HepG2 (cell line): ENCODE measurements at regions of chr2 and their contacts with region 1.

Region 1: GRCh38 chr2:47906157-47907038 is at the start of gene FBXO11:
- DNase-seq: peak; percentile 98
- ATAC-seq: peak; percentile 90
- H3K4me3 ChIP-seq: peak within 1 kb of the TSS; percentile 96 to 100 (median 98)
- H3K27ac ChIP-seq: peak within 1 kb of the TSS; percentile 98
- H3K4me1 ChIP-seq: peaks cover 29% of the 10 kb centered on the region
- H3K27me3 ChIP-seq: peaks cover 0 to 1% of the 10 kb centered on the region in 2 experiments; a peak in 2 of 5 replicates
- CTCF ChIP-seq: peak; percentile 87
- EP300 ChIP-seq: no peak; a peak in 2 of 4 replicates
- POLR2A ChIP-seq: peak; percentile 75 to 88
- RAD21 ChIP-seq: peak; percentile 59
- total RNA-seq, gene FBXO11: 27.9 and 41.0 TPM in 2 replicates

Region 2: GRCh38 chr2:47602996-47603395 is 303.4 kb before region 1 on chr2:
- CTCF ChIA-PET with region 1: no interaction called
- POLR2A ChIA-PET with region 1: no interaction called
- in situ Hi-C with region 1: no loop called
- intact Hi-C with region 1: no loop called
- DNase-seq: no peak
- ATAC-seq: peak; percentile 63; the same call in 1 of the 3 replicates
- H3K4me3 ChIP-seq: no peak overlapping the region
- H3K27ac ChIP-seq: no peak overlapping the region
- H3K4me1 ChIP-seq: no peaks in the 10 kb centered on the region
- H3K27me3 ChIP-seq: peaks cover 0 to 12% of the 10 kb centered on the region in 2 experiments; a peak in 3 of 5 replicates
- CTCF ChIP-seq: no peak
- EP300 ChIP-seq: no peak
- POLR2A ChIP-seq: no peak
- RAD21 ChIP-seq: no peak

Region 3: DNA sequence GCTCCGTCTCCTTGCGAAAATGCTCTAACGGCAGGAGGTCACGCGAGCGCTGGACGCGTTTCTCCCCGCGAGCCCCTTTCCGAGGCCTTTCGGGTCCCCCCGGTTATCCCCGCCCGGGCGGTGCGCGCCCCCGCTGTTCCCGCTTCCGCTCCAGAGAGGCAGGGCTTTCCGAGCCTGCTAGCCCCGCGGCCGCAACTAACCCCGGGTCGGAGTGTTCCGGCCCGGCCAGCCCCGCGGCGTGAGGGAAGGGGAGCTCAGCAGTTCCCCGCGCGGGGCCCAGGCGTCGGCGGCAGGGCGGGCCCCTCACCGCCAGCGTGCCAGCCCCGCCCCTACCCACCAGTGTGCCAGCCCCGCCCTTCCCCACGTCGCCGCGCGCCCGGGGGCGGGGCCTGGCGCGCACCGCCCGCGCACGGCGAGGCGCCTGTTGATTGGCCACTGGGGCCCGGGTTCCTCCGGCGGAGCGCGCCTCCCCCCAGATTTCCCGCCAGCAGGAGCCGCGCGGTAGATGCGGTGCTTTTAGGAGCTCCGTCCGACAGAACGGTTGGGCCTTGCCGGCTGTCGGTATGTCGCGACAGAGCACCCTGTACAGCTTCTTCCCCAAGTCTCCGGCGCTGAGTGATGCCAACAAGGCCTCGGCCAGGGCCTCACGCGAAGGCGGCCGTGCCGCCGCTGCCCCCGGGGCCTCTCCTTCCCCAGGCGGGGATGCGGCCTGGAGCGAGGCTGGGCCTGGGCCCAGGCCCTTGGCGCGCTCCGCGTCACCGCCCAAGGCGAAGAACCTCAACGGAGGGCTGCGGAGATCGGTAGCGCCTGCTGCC is 123.5 kb before region 1 on chr2 and contains the start of gene MSH6:
- CTCF ChIA-PET with region 1: no interaction called
- POLR2A ChIA-PET with region 1: interaction called, 4 read pairs
- in situ Hi-C with region 1: no loop called
- intact Hi-C with region 1: loop called (anchors 10 kb)
- DNase-seq: peak; percentile 85
- ATAC-seq: peak; percentile 87
- H3K4me3 ChIP-seq: peak within 1 kb of the TSS; percentile 77 to 85 (median 82)
- H3K27ac ChIP-seq: peak within 1 kb of the TSS; percentile 93
- H3K4me1 ChIP-seq: peaks cover 50% of the 10 kb centered on the region
- H3K27me3 ChIP-seq: peaks cover 0 to 11% of the 10 kb centered on the region in 2 experiments; a peak in 3 of 5 replicates
- CTCF ChIP-seq: no peak; the same call in 1 of the 2 replicates
- EP300 ChIP-seq: no peak
- POLR2A ChIP-seq: peak; percentile 83 to 86
- RAD21 ChIP-seq: peak; percentile 40; the same call in 1 of the 2 replicates
- total RNA-seq, gene MSH6: 113 and 168 TPM in 2 replicates

Region 4: GRCh38 chr2:47950340-47951301 is 44.2 kb after region 1 on chr2:
- CTCF ChIA-PET with region 1: no interaction called
- POLR2A ChIA-PET with region 1: no interaction called
- in situ Hi-C with region 1: no loop called
- intact Hi-C with region 1: no loop called
- DNase-seq: no peak
- ATAC-seq: no peak
- H3K4me3 ChIP-seq: no peak overlapping the region
- H3K27ac ChIP-seq: no peak overlapping the region
- H3K4me1 ChIP-seq: no peaks in the 10 kb centered on the region
- H3K27me3 ChIP-seq: 0 out of 5 replicates have a peak, but pooled peaks cover 0 to 3% of the 10 kb centered on the region in 2 experiments
- CTCF ChIP-seq: no peak
- EP300 ChIP-seq: no peak
- POLR2A ChIP-seq: no peak
- RAD21 ChIP-seq: no peak

Region 5: GRCh38 chr2:48016225-48017019 is 110.0 kb after region 1 on chr2:
- CTCF ChIA-PET with region 1: no interaction called
- POLR2A ChIA-PET with region 1: no interaction called
- in situ Hi-C with region 1: no loop called
- intact Hi-C with region 1: loop called (anchors 1 kb)
- DNase-seq: peak; percentile 43
- ATAC-seq: peak; percentile 94
- H3K4me3 ChIP-seq: no peak overlapping the region
- H3K27ac ChIP-seq: no peak overlapping the region
- H3K4me1 ChIP-seq: no peaks in the 10 kb centered on the region
- H3K27me3 ChIP-seq: no peaks in the 10 kb centered on the region; a peak in 2 of 5 replicates
- CTCF ChIP-seq: peak; percentile 43
- EP300 ChIP-seq: no peak
- POLR2A ChIP-seq: no peak
- RAD21 ChIP-seq: no peak

Region 6: DNA sequence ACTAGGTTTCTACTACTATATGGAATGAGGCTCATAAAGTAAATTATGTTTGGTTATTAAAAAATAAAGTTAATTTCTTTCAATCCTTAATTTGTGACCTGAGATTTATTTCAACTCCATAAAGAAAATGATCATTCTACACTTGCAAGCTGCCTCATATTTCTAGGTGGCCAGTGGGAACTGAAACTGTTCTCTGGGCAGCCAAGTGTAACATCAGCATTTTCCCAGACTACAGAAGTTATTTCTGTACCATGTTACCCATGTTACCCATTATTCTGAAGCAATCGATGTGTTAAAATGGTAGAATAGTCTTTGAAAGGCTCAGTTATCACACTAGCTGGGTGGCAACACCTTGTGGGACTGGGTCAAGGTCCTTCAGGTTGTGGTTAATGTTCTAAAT is 139.2 kb after region 1 on chr2:
- CTCF ChIA-PET with region 1: no interaction called
- POLR2A ChIA-PET with region 1: no interaction called
- in situ Hi-C with region 1: no loop called
- intact Hi-C with region 1: no loop called
- DNase-seq: no peak
- ATAC-seq: no peak
- H3K4me3 ChIP-seq: no peak overlapping the region
- H3K27ac ChIP-seq: no peak overlapping the region
- H3K4me1 ChIP-seq: no peaks in the 10 kb centered on the region
- H3K27me3 ChIP-seq: no peaks in the 10 kb centered on the region
- CTCF ChIP-seq: no peak
- EP300 ChIP-seq: no peak
- POLR2A ChIP-seq: no peak
- RAD21 ChIP-seq: no peak

Region 7: DNA sequence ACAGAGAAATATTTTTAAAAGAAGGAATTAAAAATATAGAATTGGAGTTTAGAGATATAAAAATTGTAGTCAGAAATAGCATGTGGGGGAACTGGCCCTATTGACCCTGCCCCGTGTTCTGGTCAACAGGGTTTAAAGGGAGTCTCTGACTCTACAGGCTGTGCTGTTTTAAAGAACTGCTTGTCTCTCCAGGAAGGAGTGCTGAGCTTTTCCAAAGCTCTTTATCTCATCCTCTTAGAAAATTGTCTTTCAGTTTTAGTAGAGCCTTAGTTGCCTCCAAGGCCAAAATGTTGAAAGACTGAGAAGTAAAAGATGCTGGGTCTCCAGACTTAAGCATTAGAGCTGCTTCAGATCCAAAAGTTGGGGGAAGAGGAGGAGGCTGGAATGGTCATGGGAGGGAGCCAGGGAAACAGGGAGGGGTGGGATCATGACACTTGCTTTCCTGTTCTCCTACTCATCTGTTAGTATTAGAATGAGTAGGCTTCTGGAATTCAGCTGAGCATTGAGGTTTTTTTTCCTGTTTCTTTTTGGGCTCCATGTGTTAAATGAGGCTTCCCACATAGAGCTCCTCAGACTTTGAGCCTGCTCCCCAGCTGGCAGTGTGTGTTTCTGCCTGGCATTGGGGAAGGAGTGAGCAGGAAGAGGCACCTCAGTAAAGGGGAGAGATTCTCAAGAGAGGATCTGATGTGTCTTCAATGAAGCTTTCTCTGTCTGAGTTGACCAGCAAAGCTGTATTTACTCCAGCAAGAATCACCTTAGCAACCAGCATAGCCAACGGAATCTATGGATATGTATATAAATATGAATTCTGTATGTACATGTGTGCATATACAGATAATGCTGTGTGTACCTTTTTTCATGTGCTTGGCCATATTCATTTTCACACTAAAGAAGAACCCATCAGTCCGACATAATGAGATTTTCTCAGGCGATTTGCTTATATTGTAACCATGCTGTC is 186.7 kb after region 1 on chr2:
- CTCF ChIA-PET with region 1: no interaction called
- POLR2A ChIA-PET with region 1: no interaction called
- in situ Hi-C with region 1: no loop called
- intact Hi-C with region 1: loop called (anchors 5 kb)
- DNase-seq: no peak
- ATAC-seq: no peak
- H3K4me3 ChIP-seq: no peak overlapping the region
- H3K27ac ChIP-seq: no peak overlapping the region
- H3K4me1 ChIP-seq: no peaks in the 10 kb centered on the region
- H3K27me3 ChIP-seq: no peaks in the 10 kb centered on the region; a peak in 2 of 5 replicates
- CTCF ChIP-seq: no peak
- EP300 ChIP-seq: no peak
- POLR2A ChIP-seq: no peak
- RAD21 ChIP-seq: no peak

Region 8: DNA sequence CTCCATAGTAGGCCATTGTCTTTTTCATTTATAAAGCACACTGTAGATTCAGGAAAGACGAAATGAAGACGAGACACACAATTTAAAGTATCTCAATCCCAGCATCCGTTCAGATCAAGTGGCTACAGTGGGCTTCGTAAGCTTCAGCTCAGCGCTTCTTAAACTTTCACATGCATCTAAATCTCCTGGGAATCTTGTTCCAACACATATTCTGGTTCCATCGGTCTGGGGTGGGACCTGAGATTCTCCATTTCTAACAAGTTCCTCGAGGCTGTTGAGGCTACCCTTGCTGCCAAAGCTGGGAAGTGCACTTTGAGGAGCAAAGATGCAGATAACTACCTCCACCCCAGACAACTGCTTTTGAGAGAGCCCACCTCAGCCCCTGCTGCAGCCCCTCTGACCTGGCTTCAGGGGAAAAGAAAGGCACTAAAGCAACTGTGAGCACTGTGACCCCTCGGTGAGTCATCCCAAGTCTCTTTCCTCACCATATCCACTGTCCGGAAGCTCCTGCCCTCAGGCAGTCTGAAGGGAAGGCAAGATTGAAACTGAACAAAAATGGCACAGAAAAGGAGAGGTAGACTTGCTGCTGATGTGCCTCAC is 201.0 kb after region 1 on chr2:
- CTCF ChIA-PET with region 1: interaction called, 7 read pairs
- POLR2A ChIA-PET with region 1: no interaction called
- in situ Hi-C with region 1: no loop called
- intact Hi-C with region 1: loop called (anchors 1 kb)
- DNase-seq: peak; percentile 39
- ATAC-seq: no peak
- H3K4me3 ChIP-seq: peak overlapping the region in 1 of 3 experiments; percentile 74; a peak in 2 of 6 replicates
- H3K27ac ChIP-seq: no peak overlapping the region
- H3K4me1 ChIP-seq: peaks cover 51% of the 10 kb centered on the region
- H3K27me3 ChIP-seq: peaks cover 0 to 3% of the 10 kb centered on the region in 2 experiments; a peak in 1 of 5 replicates
- CTCF ChIP-seq: no peak
- EP300 ChIP-seq: peak in 1 of 2 experiments; percentile 10; a peak in 1 of 4 replicates
- POLR2A ChIP-seq: no peak
- RAD21 ChIP-seq: no peak

Region 9: GRCh38 chr2:48227617-48228344 is 321.4 kb after region 1 on chr2:
- CTCF ChIA-PET with region 1: no interaction called
- POLR2A ChIA-PET with region 1: no interaction called
- in situ Hi-C with region 1: no loop called
- intact Hi-C with region 1: loop called (anchors 10 kb)
- DNase-seq: no peak
- ATAC-seq: no peak
- H3K4me3 ChIP-seq: no peak overlapping the region
- H3K27ac ChIP-seq: no peak overlapping the region
- H3K4me1 ChIP-seq: peaks cover 33% of the 10 kb centered on the region
- H3K27me3 ChIP-seq: no peaks in the 10 kb centered on the region
- CTCF ChIP-seq: no peak
- EP300 ChIP-seq: no peak
- POLR2A ChIP-seq: no peak
- RAD21 ChIP-seq: no peak